Dendritic cell treated with granulocyte-macrophage colony-stimulating factor and Interleukin-4, amounts not matched to agents 40 ng/mL and 50 ng/mL, for 4 days (primary cell): ENCODE measurements at regions of chr1 and their contacts with region 1.

Region 1: GRCh38 chr1:174068000-174068399 is 45.8 kb upstream of the RC3H1 start:
- H3K4me3 Mint-ChIP-seq: no peak overlapping the region
- H3K27ac Mint-ChIP-seq: no peak overlapping the region
- H3K4me1 Mint-ChIP-seq: no peaks in the 10 kb centered on the region
- H3K27me3 Mint-ChIP-seq: no peaks in the 10 kb centered on the region

Region 2: DNA sequence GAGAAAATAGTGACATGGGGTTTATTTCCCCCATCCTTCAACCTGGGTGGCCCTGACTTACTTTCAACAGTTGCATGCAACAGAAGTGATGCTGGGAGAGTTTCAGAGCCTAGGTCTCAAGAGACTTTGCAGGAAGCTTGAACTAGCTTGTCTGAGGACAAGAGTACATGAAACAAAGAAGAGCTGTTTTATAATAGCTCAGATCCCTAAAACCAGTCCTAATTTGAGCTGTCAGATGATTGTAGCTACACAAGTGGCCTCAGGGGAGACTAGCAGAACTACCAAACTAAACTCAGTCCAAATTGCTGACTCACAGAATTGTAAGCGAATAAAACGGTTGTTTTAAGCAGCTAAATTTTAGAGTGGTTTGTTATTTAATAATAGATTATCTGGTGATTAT is 63.0 kb before region 1 on chr1:
- intact Hi-C with region 1: loop called (anchors 10 kb)
- H3K4me3 Mint-ChIP-seq: no peak overlapping the region
- H3K27ac Mint-ChIP-seq: no peak overlapping the region
- H3K4me1 Mint-ChIP-seq: peaks cover 70% of the 10 kb centered on the region
- H3K27me3 Mint-ChIP-seq: no peaks in the 10 kb centered on the region

Region 3: GRCh38 chr1:174276087-174276486 is 208.1 kb after region 1 on chr1:
- intact Hi-C with region 1: no loop called
- H3K4me3 Mint-ChIP-seq: no peak overlapping the region
- H3K27ac Mint-ChIP-seq: no peak overlapping the region
- H3K4me1 Mint-ChIP-seq: no peaks in the 10 kb centered on the region
- H3K27me3 Mint-ChIP-seq: no peaks in the 10 kb centered on the region